ENCODE measurements at regions of chr10 and their contacts with region 1.

Region 1: DNA sequence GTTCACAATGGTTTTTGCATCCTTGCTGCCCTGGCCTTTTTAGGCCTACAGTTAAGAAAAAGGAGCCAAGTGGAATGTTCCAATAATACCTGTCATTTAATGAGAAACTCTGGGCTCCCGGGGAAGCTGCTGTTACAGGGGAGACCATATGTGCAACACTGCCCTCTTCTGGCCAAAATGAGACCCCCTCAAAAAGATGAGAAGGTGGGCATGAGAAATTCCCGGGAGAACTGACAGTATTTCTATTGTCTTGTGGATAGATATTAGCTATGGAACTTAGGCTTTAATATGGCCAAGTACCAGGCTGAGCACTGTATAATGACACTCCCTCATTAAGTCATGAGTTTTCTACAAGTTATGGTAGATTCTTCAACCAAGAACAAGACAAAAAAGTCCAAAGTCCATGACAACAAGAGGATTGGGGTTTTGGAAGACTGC is 99.4 kb downstream of the CCDC3 start:
- DNase-seq: peak in 1 of 2 donors; percentile 62
- ATAC-seq: peak in 3 of 8 donors; percentile 33 to 46 (median 34)
- H3K4me3 ChIP-seq: no peak overlapping the region
- H3K27ac ChIP-seq: no peak overlapping the region
- H3K4me1 ChIP-seq: peaks cover 0 to 9% (median 0%) of the 10 kb centered on the region in 9 donors
- H3K27me3 ChIP-seq: peaks cover 0 to 11% (median 0%) of the 10 kb centered on the region in 7 donors
- CTCF ChIP-seq: peak; percentile 54 to 88 (median 78)

Region 2: GRCh38 chr10:11898372-11899066 is 1003.6 kb before region 1 on chr10:
- intact Hi-C with region 1: no loop called
- DNase-seq: no peak
- ATAC-seq: peak in 1 of 8 donors; percentile 9
- H3K4me3 ChIP-seq: no peak overlapping the region
- H3K27ac ChIP-seq: no peak overlapping the region
- H3K4me1 ChIP-seq: no peaks in the 10 kb centered on the region
- H3K27me3 ChIP-seq: peaks cover 0 to 25% (median 5%) of the 10 kb centered on the region in 7 donors
- CTCF ChIP-seq: no peak

Region 3: DNA sequence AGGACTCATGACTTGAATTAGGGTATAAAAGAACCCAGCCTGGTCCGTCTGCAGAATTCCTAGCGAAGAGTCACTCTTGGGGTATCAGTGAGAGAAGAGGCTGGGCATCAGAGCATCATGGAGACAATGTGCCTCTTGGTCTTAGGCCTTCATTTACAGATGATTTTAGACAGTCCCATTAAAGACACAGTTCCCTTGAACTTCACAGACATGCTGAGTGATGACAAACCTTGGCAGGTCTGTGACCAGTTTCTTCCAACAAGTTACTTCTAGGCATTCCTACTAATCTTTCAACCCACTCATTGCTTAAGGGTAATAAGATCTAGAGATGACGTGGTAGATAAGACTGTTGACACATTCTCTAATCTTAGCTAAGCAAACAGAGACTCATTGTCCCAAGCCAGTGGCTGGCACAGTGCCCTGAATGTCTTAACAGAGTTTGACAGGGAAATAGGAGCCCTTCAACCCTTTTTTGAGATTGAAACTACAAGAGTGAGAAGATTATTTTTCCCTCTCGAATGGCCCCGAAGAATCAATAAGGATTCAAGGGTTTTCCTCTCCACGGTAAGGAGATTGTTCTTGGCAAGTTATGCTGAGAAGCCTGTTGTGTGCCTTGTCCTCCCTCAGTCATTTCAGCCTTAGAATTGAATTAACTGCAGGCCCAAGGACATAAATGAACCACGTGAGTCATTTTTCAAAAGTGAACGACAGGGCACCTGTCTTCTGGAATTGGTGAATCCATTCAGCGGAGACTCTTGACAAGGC is 181.8 kb before region 1 on chr10:
- intact Hi-C with region 1: loop called in 8 of 10 experiments (anchors 2 to 10 kb)
- DNase-seq: peak; percentile 54 to 63
- ATAC-seq: peak in 7 of 8 donors; percentile 70 to 93 (median 78)
- H3K4me3 ChIP-seq: no peak overlapping the region
- H3K27ac ChIP-seq: peak overlapping the region in 3 of 10 donors; percentile 24 to 42 (median 42)
- H3K4me1 ChIP-seq: peaks cover 0 to 21% (median 15%) of the 10 kb centered on the region in 9 donors
- H3K27me3 ChIP-seq: no peaks in the 10 kb centered on the region
- CTCF ChIP-seq: no peak

Region 4: GRCh38 chr10:12741360-12741804 is 160.8 kb before region 1 on chr10:
- intact Hi-C with region 1: no loop called
- DNase-seq: peak; percentile 43 to 56
- ATAC-seq: peak; percentile 87 to 93 (median 90)
- H3K4me3 ChIP-seq: no peak overlapping the region
- H3K27ac ChIP-seq: peak overlapping the region in 7 of 10 donors; percentile 37 to 77 (median 67)
- H3K4me1 ChIP-seq: peaks cover 0 to 23% (median 3%) of the 10 kb centered on the region in 9 donors
- H3K27me3 ChIP-seq: no peaks in the 10 kb centered on the region
- CTCF ChIP-seq: no peak

Region 5: GRCh38 chr10:12782537-12782936 is 119.6 kb before region 1 on chr10:
- intact Hi-C with region 1: loop called in 6 of 10 experiments (anchors 5 kb)
- DNase-seq: peak; percentile 29 to 30
- ATAC-seq: no peak
- H3K4me3 ChIP-seq: no peak overlapping the region
- H3K27ac ChIP-seq: no peak overlapping the region
- H3K4me1 ChIP-seq: peaks cover 0 to 13% (median 0%) of the 10 kb centered on the region in 9 donors
- H3K27me3 ChIP-seq: no peaks in the 10 kb centered on the region
- CTCF ChIP-seq: peak; percentile 36 to 78 (median 70)